Posterior cingulate gyrus (tissue), 11 donors: ENCODE measurements at regions of chr13 and their contacts with region 1.

Region 1: DNA sequence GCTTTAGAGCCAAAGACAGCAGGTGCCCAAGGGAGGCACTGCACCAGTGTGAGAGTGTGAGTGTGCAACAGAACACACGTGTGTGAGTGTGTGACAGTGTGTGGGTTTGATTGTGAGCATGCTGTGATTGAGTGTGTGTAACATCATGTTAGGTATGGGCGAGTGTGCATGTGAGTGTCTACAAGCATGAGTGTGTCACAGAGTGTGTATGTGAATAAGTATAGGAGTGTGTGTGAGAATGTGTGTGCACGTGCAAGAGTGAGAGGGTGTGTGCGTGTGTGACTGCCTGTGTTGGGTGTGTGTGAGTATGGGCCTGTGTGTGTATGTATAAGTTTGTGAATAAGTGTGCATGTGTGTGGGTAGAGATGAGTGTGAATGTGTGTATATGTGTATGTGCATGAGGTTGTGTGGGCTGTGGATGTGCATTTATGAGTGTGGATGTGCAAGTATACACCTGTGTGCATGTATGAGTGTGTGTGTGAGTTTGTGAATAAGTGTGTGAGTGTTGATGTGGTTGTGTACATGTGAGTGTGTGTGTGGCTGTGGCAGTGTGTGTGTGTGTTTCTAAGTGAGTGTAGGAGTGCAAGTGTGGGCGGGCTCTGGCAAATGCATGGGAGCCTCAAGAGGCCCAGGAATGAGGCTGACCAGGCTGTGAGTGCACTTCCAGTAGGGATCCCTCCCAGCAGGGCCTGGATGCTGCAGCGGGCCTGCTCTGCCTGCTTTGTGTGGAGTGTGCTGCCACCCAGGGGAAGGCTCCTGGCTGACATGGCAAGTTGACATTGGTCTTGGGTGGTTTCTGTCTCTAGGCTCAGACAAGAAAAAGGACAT is 198.4 kb downstream of the COL4A1 start:
- DNase-seq: peak; percentile 70 to 98 (median 83)

Region 2: GRCh38 chr13:109790951-109791605 is 317.5 kb before region 1 on chr13:
- intact Hi-C with region 1: loop called (anchors 10 kb)
- DNase-seq: peak in 3 of 10 donors; percentile 43 to 61 (median 45)

Region 3: GRCh38 chr13:110173247-110173818 is 64.8 kb after region 1 on chr13:
- intact Hi-C with region 1: no loop called
- DNase-seq: no peak

Region 4: GRCh38 chr13:110683203-110683883 is 574.8 kb after region 1 on chr13:
- intact Hi-C with region 1: no loop called
- DNase-seq: peak in 1 of 10 donors; percentile 42